HCT116 (cell line): ENCODE measurements at regions of chr9 and their contacts with region 1.

Region 1: DNA sequence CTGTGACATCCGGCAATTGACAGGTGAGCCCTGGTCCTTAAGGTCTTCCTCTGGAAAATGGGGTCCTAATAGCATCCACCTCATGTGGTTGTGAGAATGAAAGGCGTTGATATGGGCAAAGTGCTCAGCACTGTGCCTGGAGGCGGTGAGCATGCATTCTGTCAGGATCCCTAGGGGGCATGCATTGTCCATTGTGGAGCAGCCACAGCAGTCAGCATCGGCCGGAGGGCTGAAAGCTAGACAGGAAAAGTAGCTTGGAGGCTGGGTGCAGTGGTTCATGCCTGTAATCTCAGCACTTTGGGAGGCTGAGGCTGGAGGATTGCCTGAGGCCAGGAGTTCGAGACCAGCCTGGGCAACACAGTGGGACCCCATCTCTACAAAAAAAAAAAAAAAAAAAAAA is 122.2 kb downstream of the LHX2 start:
- DNase-seq: no peak
- ATAC-seq: peak; percentile 72
- H3K4me3 ChIP-seq: no peak overlapping the region
- H3K27ac ChIP-seq: no peak overlapping the region
- H3K4me1 ChIP-seq: peaks cover 3 to 24% of the 10 kb centered on the region in 2 experiments; a peak in 3 of 4 replicates
- H3K27me3 ChIP-seq: no peaks in the 10 kb centered on the region
- CTCF ChIP-seq: peak; percentile 24 to 50 (median 26); a peak in 4 of 6 replicates
- POLR2A ChIP-seq: no peak
- RAD21 ChIP-seq: peak; percentile 79

Region 2: DNA sequence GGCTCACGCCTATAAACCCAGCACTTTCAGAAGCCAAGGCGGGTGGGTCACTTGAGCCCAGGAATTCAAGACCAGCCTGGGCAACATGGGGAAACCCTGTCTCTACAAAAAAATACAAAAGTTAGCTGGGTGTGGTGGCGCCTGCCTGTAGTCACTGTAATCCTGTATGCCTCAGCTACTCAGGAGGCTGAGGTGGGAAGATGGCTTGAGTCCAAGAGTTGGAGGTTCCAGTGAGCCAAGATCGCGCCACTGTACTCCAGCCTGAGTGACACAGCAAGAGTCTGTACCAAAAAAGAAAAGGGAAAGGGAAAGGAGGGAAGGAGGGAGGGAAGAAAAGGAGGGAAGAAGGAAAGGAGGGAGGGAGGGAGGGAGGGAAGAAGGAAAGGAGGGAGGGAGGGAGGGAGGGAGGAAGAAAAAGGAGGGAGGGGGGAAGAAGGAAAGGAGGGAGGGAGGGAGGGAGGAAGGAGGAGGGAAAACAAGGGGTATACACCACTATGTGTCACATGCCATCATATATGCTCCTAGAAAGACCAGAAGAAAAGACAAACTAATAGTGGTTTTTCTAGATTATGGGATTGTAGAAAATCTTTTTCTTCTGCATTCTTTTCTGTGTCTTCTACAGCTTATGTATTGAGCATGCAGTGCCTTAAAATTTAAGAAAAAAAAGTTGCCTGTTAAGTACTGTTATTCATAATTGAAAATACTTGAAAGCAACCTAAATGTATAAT is 443.9 kb before region 1 on chr9:
- CTCF ChIA-PET with region 1: no interaction called
- POLR2A ChIA-PET with region 1: no interaction called
- RAD21 ChIA-PET with region 1: no interaction called
- intact Hi-C with region 1: no loop called
- DNase-seq: no peak
- ATAC-seq: no peak; the same call in 1 of the 2 replicates
- H3K4me3 ChIP-seq: no peak overlapping the region
- H3K27ac ChIP-seq: no peak overlapping the region
- H3K4me1 ChIP-seq: peaks cover 0 to 7% of the 10 kb centered on the region in 2 experiments; a peak in 2 of 4 replicates
- H3K27me3 ChIP-seq: no peaks in the 10 kb centered on the region
- CTCF ChIP-seq: no peak
- POLR2A ChIP-seq: no peak
- RAD21 ChIP-seq: no peak

Region 3: GRCh38 chr9:124257844-124258606 is 124.3 kb after region 1 on chr9 and contains the start of gene NEK6:
- CTCF ChIA-PET with region 1: no interaction called
- POLR2A ChIA-PET with region 1: no interaction called
- RAD21 ChIA-PET with region 1: no interaction called
- intact Hi-C with region 1: loop called (anchors 5 kb)
- DNase-seq: no peak
- ATAC-seq: peak; percentile 28
- H3K4me3 ChIP-seq: peak within 1 kb of the TSS; percentile 66 to 93
- H3K27ac ChIP-seq: peak within 1 kb of the TSS; percentile 94
- H3K4me1 ChIP-seq: peaks cover 31 to 49% of the 10 kb centered on the region in 2 experiments
- H3K27me3 ChIP-seq: no peaks in the 10 kb centered on the region
- CTCF ChIP-seq: no peak
- POLR2A ChIP-seq: no peak
- RAD21 ChIP-seq: no peak
- total RNA-seq, gene NEK6: 40.8 TPM

Region 4: GRCh38 chr9:124818431-124819281 is 684.9 kb after region 1 on chr9:
- CTCF ChIA-PET with region 1: no interaction called
- POLR2A ChIA-PET with region 1: no interaction called
- RAD21 ChIA-PET with region 1: no interaction called
- intact Hi-C with region 1: no loop called
- DNase-seq: peak; percentile 82
- ATAC-seq: peak; percentile 87
- H3K4me3 ChIP-seq: peak overlapping the region in 1 of 2 experiments; percentile 15; a peak in 1 of 4 replicates
- H3K27ac ChIP-seq: peak overlapping the region; percentile 69
- H3K4me1 ChIP-seq: peaks cover 29 to 61% of the 10 kb centered on the region in 2 experiments
- H3K27me3 ChIP-seq: no peaks in the 10 kb centered on the region
- CTCF ChIP-seq: peak in 1 of 3 experiments; percentile 24; a peak in 2 of 6 replicates
- POLR2A ChIP-seq: no peak
- RAD21 ChIP-seq: no peak